ENCODE measurements at regions of chr2 and their contacts with region 1.

Region 1: GRCh38 chr2:129936334-129936934 is 43.0 kb upstream of the RAB6C start:
- DNase-seq: no peak
- H3K4me3 ChIP-seq: no peak overlapping the region
- H3K27ac ChIP-seq: no peak overlapping the region
- H3K4me1 ChIP-seq: no peaks in the 10 kb centered on the region
- H3K27me3 ChIP-seq: peaks cover 2 to 3% of the 10 kb centered on the region in 2 experiments
- CTCF ChIP-seq: no peak
- POLR2A ChIP-seq: no peak

Region 2: GRCh38 chr2:130181325-130181879 is 245.0 kb after region 1 on chr2 and contains the start of gene SMPD4:
- CTCF ChIA-PET with region 1: interaction called, 4 read pairs
- POLR2A ChIA-PET with region 1: interaction called, 3 read pairs
- dilution Hi-C with region 1: no loop called
- intact Hi-C with region 1: loop called (anchors 5 kb)
- DNase-seq: peak; percentile 96
- H3K4me3 ChIP-seq: peak within 1 kb of the TSS; percentile 76 to 96 (median 88)
- H3K27ac ChIP-seq: peak within 1 kb of the TSS; percentile 78
- H3K4me1 ChIP-seq: peaks cover 11% of the 10 kb centered on the region
- H3K27me3 ChIP-seq: no peaks in the 10 kb centered on the region
- CTCF ChIP-seq: no peak
- POLR2A ChIP-seq: peak; percentile 53
- total RNA-seq, gene SMPD4: 88.1 and 91.4 TPM in 2 replicates